ENCODE measurements at regions of chr12 and their contacts with region 1.

Region 1: GRCh38 chr12:91382081-91382543 is 199.5 kb upstream of the DCN start:
- DNase-seq: peak; percentile 64 to 93
- ATAC-seq: peak; percentile 71

Region 2: DNA sequence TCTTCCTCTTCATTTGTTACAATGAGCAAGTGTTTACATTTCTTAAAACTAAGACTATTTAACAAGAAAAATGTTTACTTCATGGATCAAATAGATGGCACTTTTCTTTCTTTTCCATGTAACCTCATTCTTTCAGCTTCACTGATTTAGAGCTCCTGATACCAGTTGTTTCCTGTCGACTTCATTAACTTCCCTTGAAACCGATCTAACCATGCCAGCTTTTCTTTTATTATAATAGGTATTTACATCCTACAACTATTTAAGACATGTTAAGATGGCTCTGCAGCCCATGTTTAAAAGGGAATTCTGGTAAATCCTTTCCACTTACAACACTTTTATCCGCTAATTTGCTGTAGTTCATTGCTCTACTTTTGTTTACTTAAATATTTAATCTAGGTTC is 92.2 kb before region 1 on chr12:
- intact Hi-C with region 1: no loop called
- DNase-seq: no peak
- ATAC-seq: no peak

Region 3: GRCh38 chr12:92145731-92146496 is 763.8 kb after region 1 on chr12 and contains the start of gene BTG1:
- intact Hi-C with region 1: loop called in 1 of 2 experiments (anchors 10 kb)
- DNase-seq: peak; percentile 98 to 99
- ATAC-seq: peak; percentile 78
- total RNA-seq, gene BTG1: 144 to 182 TPM

Region 4: GRCh38 chr12:92582475-92582874 is 1200.4 kb after region 1 on chr12:
- intact Hi-C with region 1: loop called in 1 of 2 experiments (anchors 10 kb)
- DNase-seq: no peak
- ATAC-seq: no peak

Region 5: DNA sequence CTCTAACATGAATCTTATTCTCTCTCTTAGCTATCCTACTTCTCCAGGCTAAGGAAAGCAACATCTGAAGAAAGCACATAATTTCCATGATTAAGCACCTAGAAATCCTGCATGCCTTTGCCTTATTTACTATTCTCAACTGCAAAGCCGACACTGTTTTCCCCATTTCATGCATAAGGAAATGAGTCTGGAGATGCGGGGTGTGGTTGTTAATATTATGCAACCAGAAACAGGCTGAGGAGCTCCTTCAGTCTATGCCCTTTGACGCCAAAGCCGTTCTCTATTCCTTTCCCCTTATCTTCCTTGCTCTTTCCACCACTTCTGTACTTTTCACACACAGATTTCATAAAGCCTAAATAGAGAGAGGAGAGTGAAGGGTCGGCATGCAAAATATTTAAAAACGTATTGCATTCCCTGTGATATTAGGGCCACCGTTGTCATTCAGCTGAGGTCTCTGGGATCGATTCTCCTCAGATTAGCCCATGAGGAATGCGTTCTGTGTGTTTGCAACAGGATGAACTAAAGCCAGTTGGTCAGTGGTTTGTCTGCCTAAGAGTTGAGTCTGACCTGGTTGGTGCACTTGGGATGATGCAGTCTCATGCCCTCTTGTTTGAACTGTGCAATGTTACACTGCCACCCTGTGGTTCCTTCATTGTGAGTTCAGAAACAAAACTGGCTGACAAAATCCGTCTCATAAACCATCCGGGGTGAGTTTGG is 1267.6 kb after region 1 on chr12:
- intact Hi-C with region 1: loop called in 1 of 2 experiments (anchors 10 kb)
- DNase-seq: peak; percentile 29 to 41
- ATAC-seq: peak; percentile 92

Measured in left colon (tissue), 2 donors.